ENCODE measurements at regions of chr19 and their contacts with region 1.

Region 1: GRCh38 chr19:49443366-49444099 is 2.2 kb upstream of the SLC17A7 start:
- DNase-seq: peak; percentile 96
- ATAC-seq: peak; percentile 93
- H3K4me3 ChIP-seq: peak overlapping the region; percentile 86
- H3K27ac ChIP-seq: peak overlapping the region; percentile 69
- H3K4me1 ChIP-seq: peaks cover 4% of the 10 kb centered on the region
- H3K27me3 ChIP-seq: peaks cover 33% of the 10 kb centered on the region
- CTCF ChIP-seq: peak; percentile 75

Region 2: GRCh38 chr19:49224856-49225255 is 218.7 kb before region 1 on chr19:
- intact Hi-C with region 1: loop called (anchors 10 kb)
- DNase-seq: no peak
- ATAC-seq: peak; percentile 71
- H3K4me3 ChIP-seq: no peak overlapping the region
- H3K27ac ChIP-seq: no peak overlapping the region
- H3K4me1 ChIP-seq: no peaks in the 10 kb centered on the region
- H3K27me3 ChIP-seq: no peaks in the 10 kb centered on the region
- CTCF ChIP-seq: peak; percentile 34

Region 3: DNA sequence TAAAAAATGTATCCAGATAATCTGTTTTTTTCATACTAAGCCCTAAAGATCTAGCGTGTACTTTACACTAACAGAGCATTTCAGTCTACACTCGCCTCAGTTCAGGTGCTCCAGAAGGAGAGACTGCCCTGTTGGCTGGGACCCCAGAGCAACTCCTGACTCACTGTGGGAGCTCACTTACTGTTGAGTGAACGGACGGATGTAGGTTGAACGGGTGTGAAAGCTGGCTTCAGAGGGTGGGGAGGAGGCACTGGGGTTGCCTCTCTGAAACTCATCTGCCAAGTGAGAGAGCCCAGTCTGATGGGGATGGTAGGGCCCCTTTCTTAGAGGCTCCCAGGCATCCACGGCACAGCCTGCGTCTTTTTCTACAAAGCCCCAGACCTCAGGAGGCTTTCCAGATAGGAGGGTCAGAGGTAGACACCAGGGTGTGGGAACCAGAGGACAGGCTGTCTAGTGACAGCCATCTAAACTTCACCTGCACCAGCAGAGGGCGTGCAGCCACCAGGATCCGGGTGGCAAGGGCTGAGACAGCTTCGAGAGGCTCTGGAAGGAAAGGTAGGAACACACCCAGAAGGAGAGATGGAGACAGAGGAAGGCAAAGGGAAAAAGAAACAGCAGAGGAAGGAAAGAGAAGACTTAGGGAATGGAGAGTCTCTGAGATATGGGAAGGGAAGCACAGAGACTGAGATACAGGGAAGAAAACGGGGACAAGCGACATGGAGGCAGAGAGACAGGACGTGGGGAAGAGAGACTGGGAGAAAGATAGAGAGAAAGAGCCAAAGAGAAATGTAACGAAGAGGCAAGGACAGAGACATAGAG is 51.7 kb before region 1 on chr19:
- intact Hi-C with region 1: loop called (anchors 5 kb)
- DNase-seq: peak; percentile 89
- ATAC-seq: peak; percentile 84
- H3K4me3 ChIP-seq: no peak overlapping the region
- H3K27ac ChIP-seq: no peak overlapping the region
- H3K4me1 ChIP-seq: no peaks in the 10 kb centered on the region
- H3K27me3 ChIP-seq: no peaks in the 10 kb centered on the region
- CTCF ChIP-seq: peak; percentile 84